H1 (cell line): ENCODE measurements at regions of chr6 and their contacts with region 1.

Region 1: DNA sequence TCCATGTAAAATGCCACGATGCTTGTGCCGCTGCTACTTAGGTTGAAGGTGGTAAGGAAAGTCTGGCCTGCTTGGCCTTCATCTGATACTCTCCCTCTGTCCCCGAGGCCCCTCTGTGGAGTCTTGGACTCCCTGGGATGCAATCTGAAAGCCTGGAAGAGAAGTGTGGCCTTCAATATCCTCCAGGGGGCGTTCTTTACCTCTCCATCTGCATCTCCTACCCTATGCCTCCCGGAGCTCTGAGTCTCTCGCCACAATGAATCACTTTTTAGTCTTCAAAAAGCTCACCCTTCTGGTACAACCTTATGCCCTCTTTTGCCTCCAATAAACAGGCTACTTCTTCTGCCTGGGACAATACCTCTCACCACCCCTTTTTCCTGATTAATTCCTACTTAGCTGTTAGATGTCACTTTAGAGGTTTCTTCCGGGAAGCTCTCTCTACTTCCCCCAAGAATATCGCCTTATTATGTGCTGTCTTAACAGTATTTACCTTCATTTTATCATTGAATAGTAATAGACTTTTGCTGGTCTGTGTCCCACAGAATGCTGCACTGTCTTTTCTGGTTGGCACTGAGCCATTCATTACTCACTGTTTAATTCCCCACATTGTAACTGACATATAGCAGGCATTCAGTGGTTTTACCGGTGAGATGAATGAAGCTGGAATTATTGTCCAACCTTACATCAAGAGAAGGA is 13.9 kb upstream of the ATG5 start:
- DNase-seq: peak; percentile 31 to 72
- H3K4me3 ChIP-seq: no peak overlapping the region
- H3K27ac ChIP-seq: no peak overlapping the region
- H3K4me1 ChIP-seq: no peaks in the 10 kb centered on the region
- H3K27me3 ChIP-seq: no peaks in the 10 kb centered on the region
- CTCF ChIP-seq: peak; percentile 55 to 81 (median 76)
- EP300 ChIP-seq: no peak
- POLR2A ChIP-seq: no peak
- RAD21 ChIP-seq: peak; percentile 82 to 85

Region 2: GRCh38 chr6:105601541-105602236 is 737.8 kb before region 1 on chr6:
- CTCF ChIA-PET with region 1: no interaction called
- POLR2A ChIA-PET with region 1: no interaction called
- DNase-seq: no peak
- H3K4me3 ChIP-seq: no peak overlapping the region
- H3K27ac ChIP-seq: no peak overlapping the region
- H3K4me1 ChIP-seq: peaks cover 0 to 4% (median 0%) of the 10 kb centered on the region in 4 experiments; a peak in 2 of 7 replicates
- H3K27me3 ChIP-seq: no peaks in the 10 kb centered on the region
- CTCF ChIP-seq: no peak
- EP300 ChIP-seq: no peak
- POLR2A ChIP-seq: no peak
- RAD21 ChIP-seq: no peak

Region 3: GRCh38 chr6:106244931-106245330 is 94.6 kb before region 1 on chr6:
- CTCF ChIA-PET with region 1: no interaction called
- POLR2A ChIA-PET with region 1: no interaction called
- DNase-seq: no peak
- H3K4me3 ChIP-seq: no peak overlapping the region
- H3K27ac ChIP-seq: no peak overlapping the region
- H3K4me1 ChIP-seq: no peaks in the 10 kb centered on the region; a peak in 1 of 7 replicates
- H3K27me3 ChIP-seq: no peaks in the 10 kb centered on the region
- CTCF ChIP-seq: no peak
- EP300 ChIP-seq: no peak
- POLR2A ChIP-seq: no peak
- RAD21 ChIP-seq: no peak

Region 4: GRCh38 chr6:106997390-106998158 is 658.1 kb after region 1 on chr6:
- CTCF ChIA-PET with region 1: interaction called, 10 read pairs
- POLR2A ChIA-PET with region 1: no interaction called
- DNase-seq: peak in 1 of 2 experiments; percentile 86
- H3K4me3 ChIP-seq: no peak overlapping the region
- H3K27ac ChIP-seq: no peak overlapping the region
- H3K4me1 ChIP-seq: peaks cover 0 to 8% (median 2%) of the 10 kb centered on the region in 4 experiments; a peak in 3 of 7 replicates
- H3K27me3 ChIP-seq: no peaks in the 10 kb centered on the region
- CTCF ChIP-seq: peak; percentile 80 to 97 (median 90)
- EP300 ChIP-seq: no peak
- POLR2A ChIP-seq: no peak
- RAD21 ChIP-seq: peak; percentile 91 to 93